ENCODE measurements at regions of chr19 and their contacts with region 1.

Region 1: GRCh38 chr19:37779127-37780005 is at the start of gene ZNF573:
- DNase-seq: peak; percentile 62 to 99 (median 94)
- ATAC-seq: peak; percentile 94
- H3K4me3 ChIP-seq: peak within 1 kb of the TSS; percentile 82
- H3K4me3 Mint-ChIP-seq: peak within 1 kb of the TSS; percentile 91 to 98 (median 96)
- H3K27ac ChIP-seq: peak within 1 kb of the TSS; percentile 99
- H3K27ac Mint-ChIP-seq: peak within 1 kb of the TSS; percentile 89 to 100 (median 98)
- H3K4me1 ChIP-seq: peaks cover 6% of the 10 kb centered on the region in 2 donors
- H3K4me1 Mint-ChIP-seq: peaks cover 9 to 53% (median 48%) of the 10 kb centered on the region in 7 donors
- H3K27me3 ChIP-seq: no peaks in the 10 kb centered on the region
- H3K27me3 Mint-ChIP-seq: no peaks in the 10 kb centered on the region
- total RNA-seq, gene ZNF573: 5.9 to 43.8 (median 16.6) TPM

Region 2: DNA sequence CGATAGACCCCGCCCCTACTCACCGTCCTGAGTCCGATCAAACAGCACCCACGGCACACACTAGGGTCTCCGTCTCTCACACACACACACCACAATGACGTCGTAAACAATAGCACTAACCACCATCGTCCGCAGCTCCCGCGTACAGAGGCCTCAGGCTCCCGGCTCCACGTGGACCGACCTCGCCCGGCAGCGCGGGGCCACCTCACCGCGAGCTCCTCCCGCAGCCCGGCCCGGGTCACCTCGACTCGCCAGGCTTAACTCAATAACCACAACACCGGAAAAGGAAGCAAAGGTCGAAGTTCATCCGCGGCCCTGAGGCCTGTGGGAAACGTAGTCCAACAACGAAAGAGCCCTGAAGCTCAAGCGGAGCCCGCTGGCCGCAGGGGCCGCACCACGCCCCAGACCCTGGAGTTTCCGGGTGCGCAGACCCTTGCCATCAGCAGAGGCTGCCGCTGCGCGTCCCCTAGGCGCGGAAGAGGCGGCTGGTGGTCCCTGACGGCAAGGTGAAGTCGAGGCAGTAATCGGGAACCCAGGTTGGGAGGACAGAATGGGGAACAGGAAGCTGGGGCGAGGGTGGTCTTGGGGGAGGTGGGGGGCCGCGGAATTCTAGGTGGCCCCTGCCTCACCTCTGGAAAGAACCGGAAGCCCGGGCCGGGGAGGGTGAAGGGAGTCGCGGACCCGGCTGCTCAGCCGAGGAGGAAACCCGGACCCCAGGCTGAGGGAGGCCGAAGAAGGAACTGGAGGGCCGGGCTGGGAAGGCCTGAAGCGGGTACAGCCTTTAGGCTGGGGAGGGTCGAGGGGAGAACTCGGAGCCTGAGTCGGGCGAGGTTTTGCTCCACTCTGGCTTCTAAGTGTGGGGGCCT is 1206.1 kb before region 1 on chr19 and contains the start of gene ZNF529:
- CTCF ChIA-PET with region 1: no interaction called
- POLR2A ChIA-PET with region 1: no interaction called
- intact Hi-C with region 1: loop called in 1 of 2 experiments (anchors 1 kb)
- DNase-seq: peak; percentile 67 to 95 (median 85)
- ATAC-seq: peak; percentile 95
- H3K4me3 ChIP-seq: peak within 1 kb of the TSS; percentile 95
- H3K4me3 Mint-ChIP-seq: peak within 1 kb of the TSS; percentile 80 to 100 (median 93)
- H3K27ac ChIP-seq: peak within 1 kb of the TSS; percentile 98
- H3K27ac Mint-ChIP-seq: peak within 1 kb of the TSS; percentile 94 to 100 (median 98)
- H3K4me1 ChIP-seq: peaks cover 0 to 15% of the 10 kb centered on the region in 2 donors
- H3K4me1 Mint-ChIP-seq: peaks cover 23 to 46% (median 40%) of the 10 kb centered on the region in 7 donors
- H3K27me3 ChIP-seq: no peaks in the 10 kb centered on the region
- H3K27me3 Mint-ChIP-seq: no peaks in the 10 kb centered on the region
- total RNA-seq, gene ZNF529: 22.6 to 37.8 (median 33.8) TPM

Region 3: GRCh38 chr19:37309834-37310575 is 469.4 kb before region 1 on chr19:
- CTCF ChIA-PET with region 1: no interaction called
- POLR2A ChIA-PET with region 1: no interaction called
- intact Hi-C with region 1: loop called in 1 of 2 experiments (anchors 10 kb)
- DNase-seq: peak in 3 of 9 donors; percentile 18 to 38 (median 32)
- ATAC-seq: peak; percentile 36
- H3K4me3 ChIP-seq: no peak overlapping the region
- H3K4me3 Mint-ChIP-seq: no peak overlapping the region
- H3K27ac ChIP-seq: no peak overlapping the region
- H3K27ac Mint-ChIP-seq: peak overlapping the region in 1 of 9 donors; percentile 28
- H3K4me1 ChIP-seq: peaks cover 0 to 5% of the 10 kb centered on the region in 2 donors
- H3K4me1 Mint-ChIP-seq: peaks cover 0 to 21% (median 13%) of the 10 kb centered on the region in 7 donors
- H3K27me3 ChIP-seq: no peaks in the 10 kb centered on the region
- H3K27me3 Mint-ChIP-seq: peaks cover 0 to 27% (median 19%) of the 10 kb centered on the region in 5 donors

Region 4: DNA sequence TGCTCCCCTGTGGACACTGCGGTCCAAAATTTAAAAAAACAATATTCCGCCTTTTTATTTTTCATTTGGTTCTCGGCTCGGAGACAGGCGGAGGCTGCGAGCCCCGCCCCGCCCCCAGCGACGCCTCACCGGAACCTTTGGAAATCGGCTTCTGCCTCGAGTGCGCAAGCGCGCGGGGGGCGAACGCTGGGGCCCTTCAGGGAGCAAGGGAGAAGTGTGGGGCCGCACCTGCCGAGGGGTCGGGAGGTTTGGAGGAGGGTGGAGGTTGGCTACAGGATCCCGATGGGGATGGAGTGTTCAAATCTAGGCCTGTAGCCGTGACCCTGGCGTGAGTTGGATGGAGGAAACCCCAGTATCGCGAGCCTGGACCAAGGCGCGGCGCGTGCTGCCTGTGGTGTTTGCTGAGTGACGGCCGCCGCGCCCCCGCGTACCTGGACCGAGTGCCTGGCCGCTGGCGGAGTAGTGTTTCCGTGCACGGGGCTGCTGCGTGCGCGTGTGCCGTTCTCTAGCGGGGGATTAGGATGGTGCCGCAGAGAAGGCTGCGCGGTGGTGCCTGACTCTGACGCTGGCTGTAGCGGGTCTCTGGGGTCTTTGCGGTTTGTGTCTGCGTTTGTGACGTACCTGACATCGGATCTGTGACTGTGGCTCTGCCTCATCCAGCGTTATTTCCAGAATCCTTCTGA is 123.5 kb before region 1 on chr19:
- CTCF ChIA-PET with region 1: no interaction called
- POLR2A ChIA-PET with region 1: interaction called, 6 read pairs
- intact Hi-C with region 1: loop called (anchors 1 kb)
- DNase-seq: peak; percentile 74 to 90 (median 86)
- ATAC-seq: peak; percentile 86
- H3K4me3 ChIP-seq: peak overlapping the region; percentile 95
- H3K4me3 Mint-ChIP-seq: peak overlapping the region; percentile 82 to 99 (median 96)
- H3K27ac ChIP-seq: peak overlapping the region; percentile 89
- H3K27ac Mint-ChIP-seq: peak overlapping the region; percentile 81 to 99 (median 97)
- H3K4me1 ChIP-seq: peaks cover 8 to 16% of the 10 kb centered on the region in 2 donors
- H3K4me1 Mint-ChIP-seq: peaks cover 28 to 40% (median 33%) of the 10 kb centered on the region in 7 donors
- H3K27me3 ChIP-seq: no peaks in the 10 kb centered on the region
- H3K27me3 Mint-ChIP-seq: peaks cover 0 to 3% (median 0%) of the 10 kb centered on the region in 5 donors

Region 5: DNA sequence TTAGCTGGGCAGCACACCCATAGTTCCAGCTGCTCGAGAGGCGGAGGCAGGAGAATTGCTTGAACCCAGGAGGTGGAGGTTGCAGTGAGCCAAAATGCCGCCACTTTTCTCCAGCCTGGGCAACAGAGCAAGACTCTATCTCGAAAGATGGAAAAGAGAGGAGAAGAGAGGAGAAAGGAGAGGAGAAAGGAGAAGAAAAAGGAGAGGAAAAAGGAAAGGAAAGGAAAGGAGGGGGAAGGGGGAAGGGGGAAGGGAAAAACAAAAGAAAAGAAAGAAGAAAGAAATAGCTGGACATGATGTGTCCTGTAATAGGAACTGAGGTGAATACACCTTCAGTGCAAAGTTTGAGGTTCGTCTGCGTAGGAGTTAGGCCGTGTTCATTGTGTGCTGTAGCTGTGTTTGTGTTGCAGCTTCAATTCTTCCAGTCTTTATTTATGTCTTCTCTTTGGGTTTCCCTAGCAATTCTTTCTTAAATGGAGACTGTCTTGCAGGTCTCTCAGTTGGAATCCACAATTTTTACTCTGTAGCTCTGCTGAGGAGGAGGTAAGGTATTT is 73.2 kb before region 1 on chr19:
- CTCF ChIA-PET with region 1: no interaction called
- POLR2A ChIA-PET with region 1: no interaction called
- intact Hi-C with region 1: no loop called
- DNase-seq: no peak
- ATAC-seq: no peak
- H3K4me3 ChIP-seq: no peak overlapping the region
- H3K4me3 Mint-ChIP-seq: no peak overlapping the region
- H3K27ac ChIP-seq: no peak overlapping the region
- H3K27ac Mint-ChIP-seq: no peak overlapping the region
- H3K4me1 ChIP-seq: no peaks in the 10 kb centered on the region
- H3K4me1 Mint-ChIP-seq: no peaks in the 10 kb centered on the region
- H3K27me3 ChIP-seq: no peaks in the 10 kb centered on the region
- H3K27me3 Mint-ChIP-seq: no peaks in the 10 kb centered on the region

Region 6: GRCh38 chr19:37719111-37719926 is 60.0 kb before region 1 on chr19 and contains the start of gene ZNF607:
- CTCF ChIA-PET with region 1: no interaction called
- POLR2A ChIA-PET with region 1: no interaction called
- intact Hi-C with region 1: loop called (anchors 1 to 2 kb)
- DNase-seq: peak; percentile 43 to 80 (median 70)
- ATAC-seq: peak; percentile 87
- H3K4me3 ChIP-seq: peak within 1 kb of the TSS; percentile 63
- H3K4me3 Mint-ChIP-seq: peak within 1 kb of the TSS; percentile 80 to 95 (median 91)
- H3K27ac ChIP-seq: peak within 1 kb of the TSS; percentile 77
- H3K27ac Mint-ChIP-seq: peak within 1 kb of the TSS; percentile 80 to 98 (median 86)
- H3K4me1 ChIP-seq: peaks cover 6 to 7% of the 10 kb centered on the region in 2 donors
- H3K4me1 Mint-ChIP-seq: peaks cover 7 to 17% (median 10%) of the 10 kb centered on the region in 7 donors
- H3K27me3 ChIP-seq: no peaks in the 10 kb centered on the region
- H3K27me3 Mint-ChIP-seq: peaks cover 0 to 5% (median 0%) of the 10 kb centered on the region in 5 donors
- total RNA-seq, gene ZNF607: 3.5 to 10.8 (median 6.5) TPM